ENCODE measurements at regions of chr19 and their contacts with region 1.

Region 1: DNA sequence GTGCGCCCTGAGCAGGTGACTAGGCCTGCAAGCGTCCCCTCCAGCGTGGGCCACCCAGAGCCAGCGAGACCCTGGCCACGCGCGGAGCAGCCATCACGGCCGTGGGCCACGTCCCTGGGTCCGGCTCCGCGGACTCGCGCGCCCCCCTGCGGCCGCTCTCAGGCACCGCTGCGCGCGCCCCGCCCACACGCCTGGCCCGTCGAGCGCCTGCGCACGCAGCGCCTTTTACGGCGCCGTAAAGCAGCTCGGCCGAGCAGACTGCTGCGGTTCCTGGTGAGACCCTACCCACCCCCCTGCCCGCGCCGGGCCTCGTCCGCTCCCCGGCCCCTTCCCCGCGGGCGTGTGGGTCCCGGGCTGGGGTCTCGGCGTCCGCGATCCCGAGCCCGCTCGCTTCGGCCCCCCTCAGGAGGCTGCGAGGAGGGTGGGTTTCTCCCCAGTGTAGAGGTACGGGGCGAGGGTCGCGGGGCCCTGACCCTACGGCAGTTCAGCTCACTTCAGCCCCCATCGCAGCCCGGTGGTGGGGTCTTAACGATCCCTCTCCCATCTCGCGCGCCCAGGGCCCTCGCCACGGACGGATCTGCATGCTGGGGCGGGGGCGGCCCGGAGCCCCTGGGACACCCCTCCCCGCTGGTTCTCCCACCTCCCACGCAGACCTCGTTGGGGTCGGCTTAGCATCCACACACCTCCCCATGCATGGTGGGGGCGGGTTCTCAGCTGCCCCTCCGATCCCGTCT is at the start of gene TRAPPC5:
- DNase-seq: peak; percentile 58
- ATAC-seq: peak; percentile 72
- H3K4me3 ChIP-seq: peak within 1 kb of the TSS; percentile 95
- H3K27ac ChIP-seq: peak within 1 kb of the TSS; percentile 96
- H3K4me1 ChIP-seq: peaks cover 3 to 26% of the 10 kb centered on the region in 2 experiments
- H3K27me3 ChIP-seq: no peaks in the 10 kb centered on the region
- CTCF ChIP-seq: peak; percentile 55 to 84 (median 79)
- POLR2A ChIP-seq: peak; percentile 52
- RAD21 ChIP-seq: peak; percentile 90
- total RNA-seq, gene TRAPPC5: 101 TPM

Region 2: GRCh38 chr19:7349961-7350711 is 330.6 kb before region 1 on chr19:
- CTCF ChIA-PET with region 1: interaction called, 15 read pairs
- POLR2A ChIA-PET with region 1: no interaction called
- RAD21 ChIA-PET with region 1: interaction called, 3 read pairs
- intact Hi-C with region 1: loop called (anchors 10 kb)
- DNase-seq: no peak
- ATAC-seq: no peak
- H3K4me3 ChIP-seq: no peak overlapping the region
- H3K27ac ChIP-seq: no peak overlapping the region
- H3K4me1 ChIP-seq: peaks cover 2 to 15% of the 10 kb centered on the region in 2 experiments; a peak in 3 of 4 replicates
- H3K27me3 ChIP-seq: no peaks in the 10 kb centered on the region
- CTCF ChIP-seq: no peak
- POLR2A ChIP-seq: no peak
- RAD21 ChIP-seq: no peak

Region 3: DNA sequence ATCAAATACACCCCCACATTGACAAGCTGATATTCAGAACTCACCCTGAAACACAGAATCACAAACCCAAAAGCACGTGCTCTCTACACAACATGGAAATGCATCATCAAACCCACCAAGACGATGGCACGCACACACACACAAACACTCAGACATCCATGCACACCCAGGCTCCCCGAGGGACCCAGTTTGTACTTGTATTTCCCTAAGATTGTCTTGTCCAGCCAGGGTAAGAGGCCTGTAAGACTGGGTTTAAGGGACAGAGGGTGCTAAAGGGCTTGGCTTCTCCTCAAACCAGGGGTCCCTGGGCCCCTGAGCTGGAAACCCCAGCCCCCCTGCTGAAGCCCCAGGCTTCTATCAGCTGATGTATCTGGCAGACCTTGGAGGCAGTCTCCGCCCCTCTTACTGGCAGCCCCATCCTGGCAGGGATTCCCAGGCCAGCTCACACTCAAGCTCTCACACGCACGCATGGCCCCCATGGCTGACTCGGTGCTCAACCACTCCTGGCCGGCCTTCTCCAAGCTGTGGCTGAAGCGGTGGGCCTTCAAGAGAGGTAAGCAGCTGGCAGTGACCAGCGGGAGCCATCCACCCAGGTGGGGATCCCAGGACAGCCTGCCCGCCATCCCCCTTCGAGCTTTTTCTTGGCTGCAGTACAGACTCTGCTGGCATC is 325.5 kb before region 1 on chr19:
- CTCF ChIA-PET with region 1: interaction called, 15 read pairs
- POLR2A ChIA-PET with region 1: no interaction called
- RAD21 ChIA-PET with region 1: interaction called, 3 read pairs
- intact Hi-C with region 1: loop called (anchors 10 kb)
- DNase-seq: no peak
- ATAC-seq: no peak
- H3K4me3 ChIP-seq: no peak overlapping the region
- H3K27ac ChIP-seq: no peak overlapping the region; the same call in 1 of the 2 replicates
- H3K4me1 ChIP-seq: peaks cover 0 to 7% of the 10 kb centered on the region in 2 experiments; a peak in 1 of 4 replicates
- H3K27me3 ChIP-seq: no peaks in the 10 kb centered on the region
- CTCF ChIP-seq: no peak
- POLR2A ChIP-seq: no peak
- RAD21 ChIP-seq: no peak

Region 4: DNA sequence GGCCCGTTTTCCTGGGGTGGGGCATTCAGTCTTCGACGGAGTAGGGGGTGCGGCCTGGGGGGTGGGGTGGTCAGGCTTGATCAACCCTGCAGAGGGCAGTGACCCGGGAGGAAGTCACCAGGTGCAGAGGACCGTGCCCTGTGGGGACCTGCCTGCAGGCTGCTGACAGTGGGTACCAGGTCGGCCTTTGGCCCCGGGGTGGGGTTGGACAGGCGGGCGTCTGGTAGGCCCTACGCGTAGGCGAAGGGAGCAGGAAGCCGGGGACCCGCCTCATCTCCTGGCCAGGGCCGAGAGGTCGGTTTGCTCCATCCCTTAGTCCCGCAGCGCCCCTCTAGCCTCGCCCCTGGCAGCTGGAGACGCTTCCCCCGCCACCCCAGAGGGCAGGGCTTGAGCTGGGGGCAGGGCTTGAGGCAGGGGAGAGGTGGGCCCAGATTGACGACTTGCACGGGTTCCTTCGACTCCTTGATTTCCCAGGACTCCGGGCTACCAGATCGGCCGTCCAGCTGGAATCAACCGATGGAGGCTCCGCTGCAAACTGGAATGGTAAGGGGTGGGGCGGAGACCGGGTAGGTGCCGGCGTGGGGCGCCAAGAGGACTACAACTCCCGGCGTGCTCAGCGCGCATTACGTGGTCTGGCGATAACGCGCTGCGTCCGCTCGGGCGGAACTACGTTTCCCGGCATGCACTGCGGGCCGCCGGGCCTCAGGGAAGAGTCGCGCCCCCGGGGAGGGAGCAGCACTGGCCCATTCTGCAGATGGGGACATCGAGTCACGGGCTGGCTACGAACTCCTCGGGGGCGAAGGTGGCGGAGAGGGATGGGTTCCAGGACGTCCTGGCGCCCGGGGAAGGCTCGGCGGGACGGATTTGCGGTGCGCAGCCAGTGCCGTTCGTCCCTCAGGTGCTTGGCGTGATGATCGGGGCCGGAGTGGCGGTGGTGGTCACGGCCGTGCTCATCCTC is 145.5 kb before region 1 on chr19 and contains the start of gene PNPLA6:
- CTCF ChIA-PET with region 1: no interaction called
- POLR2A ChIA-PET with region 1: no interaction called
- RAD21 ChIA-PET with region 1: no interaction called
- intact Hi-C with region 1: no loop called
- DNase-seq: peak; percentile 81
- ATAC-seq: peak; percentile 78
- H3K4me3 ChIP-seq: peak within 1 kb of the TSS; percentile 95 to 96
- H3K27ac ChIP-seq: peak within 1 kb of the TSS; percentile 81
- H3K4me1 ChIP-seq: peaks cover 4 to 30% of the 10 kb centered on the region in 2 experiments; a peak in 2 of 4 replicates
- H3K27me3 ChIP-seq: no peaks in the 10 kb centered on the region
- CTCF ChIP-seq: no peak
- POLR2A ChIP-seq: no peak
- RAD21 ChIP-seq: no peak
- total RNA-seq, gene PNPLA6: 159 TPM

Region 5: DNA sequence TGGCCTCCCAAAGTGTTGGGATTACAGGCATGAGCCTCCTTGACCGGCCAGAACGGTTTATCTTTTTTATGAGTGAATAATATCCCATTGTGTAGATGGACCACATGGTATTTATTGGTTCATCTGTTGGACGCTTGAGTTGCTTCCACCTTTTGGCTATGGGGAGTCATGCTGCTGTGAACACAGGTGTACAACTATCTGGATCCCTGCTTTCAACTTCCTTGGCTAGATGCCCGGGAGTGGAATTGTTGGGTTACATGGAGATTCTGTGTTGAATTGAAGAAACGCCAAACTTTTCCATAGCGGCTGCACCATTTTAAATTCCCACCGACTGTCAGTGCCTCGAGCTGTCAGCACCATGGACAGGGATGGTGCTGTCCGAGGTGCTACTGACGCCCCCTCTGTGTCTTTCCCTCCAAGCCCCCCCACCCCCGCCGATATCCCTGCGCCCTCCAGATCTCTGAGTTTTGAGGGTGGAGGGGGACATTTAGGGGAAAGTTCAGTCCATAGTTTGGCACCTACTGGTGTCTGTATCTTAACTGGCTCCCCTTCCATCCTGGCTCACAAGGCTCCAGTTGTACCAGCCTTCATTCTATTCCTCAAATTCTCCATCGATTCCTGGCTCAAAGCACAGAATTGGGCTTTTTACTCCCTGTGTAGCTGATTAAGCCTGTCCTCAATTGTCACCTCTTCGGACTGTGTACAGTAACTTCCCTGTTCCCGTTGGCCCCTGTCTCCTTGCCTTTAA is 118.0 kb before region 1 on chr19:
- CTCF ChIA-PET with region 1: interaction called, 56 read pairs
- POLR2A ChIA-PET with region 1: interaction called, 3 read pairs
- RAD21 ChIA-PET with region 1: interaction called, 14 to 19 read pairs
- intact Hi-C with region 1: loop called (anchors 1 kb)
- DNase-seq: no peak
- ATAC-seq: no peak
- H3K4me3 ChIP-seq: no peak overlapping the region
- H3K27ac ChIP-seq: no peak overlapping the region
- H3K4me1 ChIP-seq: no peaks in the 10 kb centered on the region
- H3K27me3 ChIP-seq: no peaks in the 10 kb centered on the region
- CTCF ChIP-seq: no peak
- POLR2A ChIP-seq: no peak
- RAD21 ChIP-seq: no peak

Region 6: GRCh38 chr19:7589822-7590221 is 91.0 kb before region 1 on chr19:
- CTCF ChIA-PET with region 1: no interaction called
- POLR2A ChIA-PET with region 1: no interaction called
- RAD21 ChIA-PET with region 1: no interaction called
- intact Hi-C with region 1: no loop called
- DNase-seq: no peak
- ATAC-seq: no peak
- H3K4me3 ChIP-seq: no peak overlapping the region
- H3K27ac ChIP-seq: no peak overlapping the region
- H3K4me1 ChIP-seq: peaks cover 4 to 21% of the 10 kb centered on the region in 2 experiments
- H3K27me3 ChIP-seq: no peaks in the 10 kb centered on the region
- CTCF ChIP-seq: no peak
- POLR2A ChIP-seq: no peak
- RAD21 ChIP-seq: no peak

Region 7: GRCh38 chr19:7629347-7630054 is 51.3 kb before region 1 on chr19 and contains the starts of genes PET100 and XAB2:
- CTCF ChIA-PET with region 1: interaction called, 11 read pairs
- POLR2A ChIA-PET with region 1: no interaction called
- RAD21 ChIA-PET with region 1: no interaction called
- intact Hi-C with region 1: no loop called
- DNase-seq: peak; percentile 98
- ATAC-seq: peak; percentile 95
- H3K4me3 ChIP-seq: peak within 1 kb of the TSS; percentile 79 to 96
- H3K27ac ChIP-seq: peak within 1 kb of the TSS; percentile 66
- H3K4me1 ChIP-seq: peaks cover 7 to 18% of the 10 kb centered on the region in 2 experiments
- H3K27me3 ChIP-seq: no peaks in the 10 kb centered on the region
- CTCF ChIP-seq: no peak
- POLR2A ChIP-seq: no peak
- RAD21 ChIP-seq: no peak
- total RNA-seq, gene PET100: 126 TPM
- total RNA-seq, gene XAB2: 103 TPM

Region 8: DNA sequence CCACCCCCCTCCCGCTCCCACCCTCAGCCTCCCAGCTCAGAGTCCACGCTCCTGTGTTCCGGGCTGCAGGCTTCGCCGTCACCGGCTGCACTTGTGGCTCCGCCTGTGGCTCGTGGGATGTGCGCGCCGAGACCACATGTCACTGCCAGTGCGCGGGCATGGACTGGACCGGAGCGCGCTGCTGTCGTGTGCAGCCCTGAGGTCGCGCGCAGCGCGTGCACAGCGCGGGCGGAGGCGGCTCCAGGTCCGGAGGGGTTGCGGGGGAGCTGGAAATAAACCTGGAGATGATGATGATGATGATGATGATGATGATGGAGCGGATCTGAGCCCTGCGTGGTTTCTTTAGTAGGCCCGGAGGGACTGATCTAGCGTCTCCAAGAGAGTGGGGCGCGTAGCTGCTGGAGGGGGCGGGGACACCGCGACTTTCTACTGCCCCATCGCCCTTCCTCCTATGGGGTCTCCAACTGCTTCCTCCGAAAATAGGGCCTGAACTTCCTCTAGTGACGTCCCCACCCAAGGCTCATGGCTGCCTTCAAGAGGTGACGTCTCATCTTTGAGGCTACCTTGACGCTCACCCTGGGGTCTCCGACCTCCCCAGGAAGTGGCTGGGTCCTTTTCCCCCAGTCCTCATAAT is 10.5 kb before region 1 on chr19:
- CTCF ChIA-PET with region 1: interaction called, 12 read pairs
- POLR2A ChIA-PET with region 1: interaction called, 3 read pairs
- RAD21 ChIA-PET with region 1: no interaction called
- intact Hi-C with region 1: no loop called
- DNase-seq: no peak
- ATAC-seq: no peak
- H3K4me3 ChIP-seq: no peak overlapping the region
- H3K27ac ChIP-seq: no peak overlapping the region
- H3K4me1 ChIP-seq: peaks cover 3 to 10% of the 10 kb centered on the region in 2 experiments; a peak in 3 of 4 replicates
- H3K27me3 ChIP-seq: no peaks in the 10 kb centered on the region
- CTCF ChIP-seq: no peak
- POLR2A ChIP-seq: no peak
- RAD21 ChIP-seq: no peak

Region 9: GRCh38 chr19:7734220-7735203 is 53.7 kb after region 1 on chr19:
- CTCF ChIA-PET with region 1: no interaction called
- POLR2A ChIA-PET with region 1: no interaction called
- RAD21 ChIA-PET with region 1: no interaction called
- intact Hi-C with region 1: no loop called
- DNase-seq: no peak
- ATAC-seq: no peak
- H3K4me3 ChIP-seq: no peak overlapping the region
- H3K27ac ChIP-seq: no peak overlapping the region
- H3K4me1 ChIP-seq: no peaks in the 10 kb centered on the region
- H3K27me3 ChIP-seq: peaks cover 29% of the 10 kb centered on the region
- CTCF ChIP-seq: no peak
- POLR2A ChIP-seq: no peak
- RAD21 ChIP-seq: no peak

Region 10: GRCh38 chr19:7841269-7841668 is 160.5 kb after region 1 on chr19:
- CTCF ChIA-PET with region 1: no interaction called
- POLR2A ChIA-PET with region 1: no interaction called
- RAD21 ChIA-PET with region 1: no interaction called
- intact Hi-C with region 1: no loop called
- DNase-seq: no peak
- ATAC-seq: no peak
- H3K4me3 ChIP-seq: no peak overlapping the region
- H3K27ac ChIP-seq: no peak overlapping the region
- H3K4me1 ChIP-seq: peaks cover 23 to 42% of the 10 kb centered on the region in 2 experiments
- H3K27me3 ChIP-seq: no peaks in the 10 kb centered on the region
- CTCF ChIP-seq: no peak
- POLR2A ChIP-seq: no peak
- RAD21 ChIP-seq: no peak